ENCODE measurements at regions of chr11 and their contacts with region 1.

Region 1: GRCh38 chr11:70278994-70279393 is 8.5 kb downstream of the PPFIA1 start:
- DNase-seq: no peak
- H3K4me3 ChIP-seq: no peak overlapping the region
- H3K27ac ChIP-seq: no peak overlapping the region
- H3K4me1 ChIP-seq: peaks cover 0 to 4% of the 10 kb centered on the region in 2 donors
- H3K27me3 ChIP-seq: no peaks in the 10 kb centered on the region
- CTCF ChIP-seq: no peak
- POLR2A ChIP-seq: no peak

Region 2: DNA sequence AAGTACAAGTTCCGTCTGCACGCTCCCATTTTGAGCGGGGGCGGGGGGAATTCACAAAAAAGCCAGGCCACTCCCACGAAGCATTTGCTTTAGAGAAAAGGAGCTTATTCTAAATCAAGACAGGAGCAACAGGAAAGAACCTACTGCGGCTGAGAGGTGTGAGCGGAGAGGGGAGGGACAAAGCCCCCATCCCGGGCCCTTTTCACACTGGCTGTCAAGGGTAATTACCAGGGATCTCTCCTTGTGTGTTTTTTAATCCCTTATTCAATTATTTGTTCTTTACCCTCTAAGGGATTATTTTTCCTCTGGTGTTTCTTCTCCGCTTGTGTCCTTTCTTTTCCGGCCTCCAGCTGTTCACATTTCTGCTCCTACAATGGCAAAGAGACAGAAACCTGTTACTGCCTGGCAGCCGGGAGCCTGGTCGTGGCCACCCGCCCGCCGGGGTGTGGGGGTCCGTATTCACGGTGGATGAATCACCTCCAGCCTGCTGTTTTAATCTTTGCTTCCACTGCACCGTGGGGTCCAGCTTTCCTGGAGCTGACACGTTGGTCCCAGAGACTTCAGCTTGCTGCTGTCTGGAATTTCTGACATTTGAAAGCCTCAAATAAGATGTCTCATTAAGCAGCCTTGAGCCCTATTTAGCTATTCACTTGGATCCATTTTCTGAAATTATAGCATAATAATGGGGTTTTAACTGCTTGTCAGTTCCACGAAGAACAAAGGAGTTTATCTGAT is 137.3 kb before region 1 on chr11:
- intact Hi-C with region 1: no loop called
- DNase-seq: no peak
- H3K4me3 ChIP-seq: no peak overlapping the region
- H3K27ac ChIP-seq: no peak overlapping the region
- H3K4me1 ChIP-seq: no peaks in the 10 kb centered on the region
- H3K27me3 ChIP-seq: no peaks in the 10 kb centered on the region
- CTCF ChIP-seq: no peak
- POLR2A ChIP-seq: no peak

Region 3: GRCh38 chr11:70397983-70398833 is 119.2 kb after region 1 on chr11 and contains the start of gene CTTN:
- intact Hi-C with region 1: loop called (anchors 5 kb)
- DNase-seq: peak; percentile 77 to 80
- H3K4me3 ChIP-seq: peak within 1 kb of the TSS; percentile 93 to 97 (median 95)
- H3K27ac ChIP-seq: peak within 1 kb of the TSS; percentile 36 to 87 (median 68)
- H3K4me1 ChIP-seq: peaks cover 20 to 26% of the 10 kb centered on the region in 2 donors
- H3K27me3 ChIP-seq: no peaks in the 10 kb centered on the region
- CTCF ChIP-seq: no peak
- POLR2A ChIP-seq: peak in 1 of 2 donors; percentile 73
- total RNA-seq, gene CTTN: 229 to 418 (median 295) TPM